ENCODE measurements at regions of chr12 and their contacts with region 1.

Region 1: GRCh38 chr12:2853626-2854025 is 3.2 kb downstream of the TEX52 start:
- DNase-seq: peak; percentile 14 to 63 (median 32)
- ATAC-seq: peak; percentile 70
- H3K4me3 ChIP-seq: no peak overlapping the region
- H3K4me3 Mint-ChIP-seq: no peak overlapping the region
- H3K27ac ChIP-seq: no peak overlapping the region
- H3K27ac Mint-ChIP-seq: no peak overlapping the region
- H3K4me1 ChIP-seq: peaks cover 2% of the 10 kb centered on the region
- H3K4me1 Mint-ChIP-seq: no peaks in the 10 kb centered on the region
- H3K27me3 ChIP-seq: no peaks in the 10 kb centered on the region
- H3K27me3 Mint-ChIP-seq: no peaks in the 10 kb centered on the region
- CTCF ChIP-seq: peak; percentile 57

Region 2: GRCh38 chr12:2944401-2945047 is 90.9 kb after region 1 on chr12:
- CTCF ChIA-PET with region 1: interaction called, 7 read pairs
- POLR2A ChIA-PET with region 1: no interaction called
- intact Hi-C with region 1: loop called in 1 of 2 experiments (anchors 5 kb)
- DNase-seq: peak; percentile 19 to 64 (median 38)
- ATAC-seq: peak; percentile 61
- H3K4me3 ChIP-seq: no peak overlapping the region
- H3K4me3 Mint-ChIP-seq: no peak overlapping the region
- H3K27ac ChIP-seq: no peak overlapping the region
- H3K27ac Mint-ChIP-seq: no peak overlapping the region
- H3K4me1 ChIP-seq: peaks cover 3% of the 10 kb centered on the region
- H3K4me1 Mint-ChIP-seq: no peaks in the 10 kb centered on the region
- H3K27me3 ChIP-seq: peaks cover 0 to 4% of the 10 kb centered on the region in 2 experiments
- H3K27me3 Mint-ChIP-seq: peaks cover 4% of the 10 kb centered on the region
- CTCF ChIP-seq: peak; percentile 51

Region 3: GRCh38 chr12:3041558-3042164 is 188.0 kb after region 1 on chr12:
- CTCF ChIA-PET with region 1: no interaction called
- POLR2A ChIA-PET with region 1: no interaction called
- intact Hi-C with region 1: loop called (anchors 2 to 5 kb)
- DNase-seq: peak in 13 of 14 experiments; percentile 14 to 72 (median 25)
- ATAC-seq: peak; percentile 67
- H3K4me3 ChIP-seq: no peak overlapping the region
- H3K4me3 Mint-ChIP-seq: no peak overlapping the region
- H3K27ac ChIP-seq: no peak overlapping the region
- H3K27ac Mint-ChIP-seq: no peak overlapping the region
- H3K4me1 ChIP-seq: no peaks in the 10 kb centered on the region
- H3K4me1 Mint-ChIP-seq: no peaks in the 10 kb centered on the region
- H3K27me3 ChIP-seq: peaks cover 10 to 17% of the 10 kb centered on the region in 2 experiments
- H3K27me3 Mint-ChIP-seq: peaks cover 36% of the 10 kb centered on the region
- CTCF ChIP-seq: peak; percentile 55

Region 4: GRCh38 chr12:3275171-3276041 is 421.8 kb after region 1 on chr12:
- CTCF ChIA-PET with region 1: no interaction called
- POLR2A ChIA-PET with region 1: no interaction called
- intact Hi-C with region 1: loop called in 1 of 2 experiments (anchors 10 kb)
- DNase-seq: peak; percentile 43 to 78 (median 64)
- ATAC-seq: peak; percentile 66
- H3K4me3 ChIP-seq: no peak overlapping the region
- H3K4me3 Mint-ChIP-seq: no peak overlapping the region
- H3K27ac ChIP-seq: no peak overlapping the region
- H3K27ac Mint-ChIP-seq: no peak overlapping the region
- H3K4me1 ChIP-seq: peaks cover 6% of the 10 kb centered on the region
- H3K4me1 Mint-ChIP-seq: no peaks in the 10 kb centered on the region
- H3K27me3 ChIP-seq: peaks cover 0 to 7% of the 10 kb centered on the region in 2 experiments
- H3K27me3 Mint-ChIP-seq: peaks cover 19% of the 10 kb centered on the region
- CTCF ChIP-seq: peak; percentile 98